ENCODE measurements at regions of chrX and their contacts with region 1.

Region 1: GRCh38 chrX:48957827-48958634 is 624 bp upstream of the OTUD5 start:
- DNase-seq: peak; percentile 95
- ATAC-seq: peak; percentile 85
- H3K4me3 Mint-ChIP-seq: peak overlapping the region; percentile 98
- H3K27ac Mint-ChIP-seq: peak overlapping the region; percentile 100
- H3K4me1 Mint-ChIP-seq: peaks cover 42% of the 10 kb centered on the region
- H3K27me3 Mint-ChIP-seq: no peaks in the 10 kb centered on the region
- CTCF ChIP-seq: no peak

Region 2: DNA sequence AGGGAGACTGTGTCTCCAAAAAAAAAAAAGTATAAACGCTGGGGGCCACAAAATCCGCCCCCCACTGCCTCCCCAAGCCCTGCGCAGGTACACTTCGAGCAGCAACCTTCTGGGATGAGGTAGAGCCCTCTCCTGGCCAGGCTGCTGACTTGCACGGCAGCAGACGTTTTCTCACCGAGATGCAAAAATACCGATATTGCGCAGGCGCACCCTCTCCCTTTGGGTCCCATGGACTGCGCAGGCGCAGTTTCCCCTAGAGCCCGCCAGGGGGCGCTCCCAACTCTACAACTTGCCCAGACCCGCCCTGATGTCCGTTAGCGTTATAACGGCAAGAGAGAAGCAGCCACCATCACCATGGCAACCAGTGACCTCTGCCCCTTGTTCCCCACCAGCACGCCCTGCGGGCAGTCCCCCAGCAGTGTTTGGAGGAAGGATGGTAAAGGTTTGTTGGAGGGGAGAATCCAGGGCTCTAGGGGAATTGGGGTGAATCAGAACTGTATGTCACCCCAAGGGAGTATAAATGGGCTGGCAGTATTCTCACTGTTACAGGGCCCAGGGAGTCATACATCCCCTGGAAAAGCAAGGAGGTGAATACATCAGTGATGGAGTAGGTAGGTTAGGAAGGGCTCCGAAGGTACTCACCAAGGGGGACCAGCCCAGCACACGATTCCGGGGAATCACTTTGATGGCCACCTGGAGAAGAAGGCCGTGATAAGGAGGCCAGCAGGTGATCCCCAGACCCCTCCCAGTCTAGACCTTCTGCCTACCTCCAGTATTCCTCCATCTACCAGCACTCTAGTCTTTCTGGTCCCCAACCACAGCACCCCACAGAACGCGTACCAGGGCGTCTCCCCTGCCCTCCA is 40.7 kb before region 1 on chrX:
- CTCF ChIA-PET with region 1: interaction called, 3 read pairs
- POLR2A ChIA-PET with region 1: interaction called, 10 read pairs
- intact Hi-C with region 1: no loop called
- DNase-seq: peak; percentile 94
- ATAC-seq: peak; percentile 46
- H3K4me3 Mint-ChIP-seq: peak overlapping the region; percentile 96
- H3K27ac Mint-ChIP-seq: peak overlapping the region; percentile 98
- H3K4me1 Mint-ChIP-seq: peaks cover 44% of the 10 kb centered on the region
- H3K27me3 Mint-ChIP-seq: no peaks in the 10 kb centered on the region
- CTCF ChIP-seq: peak; percentile 83

Region 3: GRCh38 chrX:48937054-48937907 is 20.8 kb before region 1 on chrX:
- CTCF ChIA-PET with region 1: no interaction called
- POLR2A ChIA-PET with region 1: interaction called, 48 read pairs
- intact Hi-C with region 1: no loop called
- DNase-seq: peak; percentile 95
- ATAC-seq: peak; percentile 61
- H3K4me3 Mint-ChIP-seq: peak overlapping the region; percentile 68
- H3K27ac Mint-ChIP-seq: peak overlapping the region; percentile 95
- H3K4me1 Mint-ChIP-seq: peaks cover 79% of the 10 kb centered on the region
- H3K27me3 Mint-ChIP-seq: no peaks in the 10 kb centered on the region
- CTCF ChIP-seq: peak; percentile 41

Region 4: DNA sequence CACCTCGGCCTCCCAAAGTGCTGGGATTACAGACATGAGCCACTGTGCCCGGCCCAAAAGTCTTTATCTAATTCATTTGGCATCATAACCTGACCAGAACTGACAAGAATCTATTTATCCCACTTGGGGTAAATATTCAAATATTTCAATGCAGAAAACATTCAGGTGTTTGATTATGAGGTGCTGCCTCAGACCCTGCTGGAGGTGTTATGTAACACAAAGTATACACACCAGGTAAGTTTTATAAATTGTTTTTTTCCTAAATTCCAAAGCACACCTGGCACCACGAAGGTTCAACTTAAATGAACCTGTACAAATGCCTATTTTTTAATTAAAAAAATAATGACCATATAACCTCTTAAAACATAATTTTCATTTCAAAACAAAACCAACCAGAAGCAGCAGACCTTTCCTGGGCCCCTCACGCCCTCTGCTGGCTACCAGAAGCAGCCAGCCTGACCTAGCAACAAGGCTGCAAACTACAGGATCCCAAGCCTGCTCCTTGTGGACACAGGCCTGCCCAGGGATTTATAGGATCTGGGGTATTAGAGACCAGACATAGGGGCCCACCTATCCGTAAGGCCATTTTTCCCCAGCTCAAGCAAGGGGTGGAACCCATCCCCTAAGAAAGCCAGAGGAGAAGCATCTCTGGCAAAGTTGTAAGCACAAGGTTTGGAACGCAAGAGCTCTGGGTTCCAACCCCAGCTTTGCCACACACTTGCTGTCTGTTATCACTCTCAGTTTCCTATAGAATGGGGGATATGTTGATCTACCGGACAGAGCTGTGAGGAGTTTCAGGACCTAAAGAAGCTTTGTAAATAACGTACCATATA is 12.3 kb before region 1 on chrX:
- CTCF ChIA-PET with region 1: interaction called, 18 read pairs
- POLR2A ChIA-PET with region 1: interaction called, 48 read pairs
- intact Hi-C with region 1: no loop called
- DNase-seq: peak; percentile 67
- ATAC-seq: peak; percentile 27
- H3K4me3 Mint-ChIP-seq: no peak overlapping the region
- H3K27ac Mint-ChIP-seq: peak overlapping the region; percentile 39
- H3K4me1 Mint-ChIP-seq: peaks cover 52% of the 10 kb centered on the region
- H3K27me3 Mint-ChIP-seq: no peaks in the 10 kb centered on the region
- CTCF ChIP-seq: peak; percentile 69

Region 5: DNA sequence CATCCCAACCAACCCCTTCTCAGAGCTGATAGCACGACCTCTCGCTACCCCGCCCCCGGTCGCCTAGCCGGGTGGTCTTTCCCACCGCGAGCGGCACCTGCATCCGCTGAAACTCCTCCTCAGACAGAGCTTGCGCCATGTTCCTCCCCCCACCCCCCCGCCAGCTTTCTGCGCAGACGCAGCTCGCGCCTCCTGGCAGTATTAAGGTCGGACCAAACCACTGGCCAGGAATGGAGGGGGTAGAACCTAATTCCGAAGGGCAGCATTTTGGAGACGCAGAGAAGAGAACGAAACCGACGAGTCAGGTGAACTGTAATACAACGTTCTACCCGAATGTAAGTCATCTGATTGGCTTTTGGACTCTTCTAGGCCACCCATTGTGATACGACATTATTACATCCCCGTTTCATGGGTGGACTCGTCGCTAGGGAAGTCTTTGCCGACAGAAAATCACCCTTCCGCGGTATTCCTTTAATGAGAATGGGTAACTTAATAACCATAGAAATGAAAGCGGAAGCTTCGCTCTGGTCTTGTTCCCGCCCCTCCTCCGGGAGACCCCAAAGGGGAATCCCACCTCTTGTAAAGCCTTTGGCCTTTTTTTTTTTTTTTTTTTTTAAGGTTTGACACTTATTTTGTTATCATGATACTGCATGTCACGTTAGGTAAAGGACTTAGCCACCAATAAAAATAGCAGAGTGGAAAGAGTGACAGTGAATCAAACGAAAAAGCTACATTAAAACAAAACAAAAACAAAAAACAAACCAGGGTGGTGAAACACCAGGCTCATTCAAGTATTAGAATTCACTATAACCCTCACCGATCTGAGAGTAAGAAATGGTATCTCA is 44.3 kb after region 1 on chrX and contains the start of gene GRIPAP1:
- CTCF ChIA-PET with region 1: no interaction called
- POLR2A ChIA-PET with region 1: interaction called, 3 read pairs
- intact Hi-C with region 1: loop called (anchors 10 kb)
- DNase-seq: peak; percentile 84
- ATAC-seq: peak; percentile 83
- H3K4me3 Mint-ChIP-seq: peak within 1 kb of the TSS; percentile 100
- H3K27ac Mint-ChIP-seq: peak within 1 kb of the TSS; percentile 99
- H3K4me1 Mint-ChIP-seq: peaks cover 33% of the 10 kb centered on the region
- H3K27me3 Mint-ChIP-seq: no peaks in the 10 kb centered on the region
- CTCF ChIP-seq: no peak
- total RNA-seq, gene GRIPAP1: 64.3 to 67.7 TPM

Region 6: DNA sequence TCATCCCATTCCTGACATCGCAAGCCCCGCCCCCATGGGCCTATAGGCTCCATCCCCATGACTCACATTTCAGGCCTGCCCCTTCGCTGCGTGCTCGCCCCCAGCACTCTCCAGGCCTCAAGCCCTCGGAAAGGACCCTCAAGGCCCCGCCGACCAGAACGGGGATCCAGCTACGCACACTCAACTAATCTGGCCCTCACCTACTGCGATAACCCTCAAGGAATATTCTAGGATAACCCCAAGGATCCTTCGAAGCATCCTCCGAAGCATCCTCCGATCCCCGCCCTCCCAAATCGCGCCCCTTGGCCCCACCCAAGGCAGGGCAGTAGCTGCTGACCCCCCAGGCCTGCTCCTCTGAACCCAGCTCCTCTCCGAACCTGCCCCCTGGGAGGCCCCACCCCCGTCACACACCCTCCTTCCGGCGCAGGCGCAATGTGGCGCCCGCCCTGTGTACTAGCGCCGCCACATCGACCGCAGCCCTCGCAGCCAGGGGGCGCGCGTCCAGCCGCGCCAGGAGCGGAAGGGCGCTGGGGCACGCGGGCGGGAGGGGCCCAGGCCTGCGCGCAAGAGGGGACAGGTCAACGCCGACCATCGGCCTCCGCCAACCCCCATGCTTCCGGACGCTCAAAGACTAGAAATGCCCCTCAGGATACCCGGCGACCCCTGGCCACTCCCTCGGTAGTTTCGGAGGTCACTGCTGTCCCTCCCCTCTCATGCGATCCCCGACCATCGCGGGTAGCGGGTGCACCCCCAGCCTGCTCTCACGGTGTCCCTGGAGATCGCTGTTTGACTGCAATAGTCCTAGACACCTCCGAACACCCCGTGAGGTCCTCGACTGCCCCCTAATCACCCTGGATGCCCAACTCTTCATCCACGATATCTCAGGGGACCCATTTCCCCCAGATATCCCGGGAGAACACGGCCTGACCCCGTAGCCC is 198.1 kb after region 1 on chrX:
- CTCF ChIA-PET with region 1: no interaction called
- POLR2A ChIA-PET with region 1: no interaction called
- intact Hi-C with region 1: no loop called
- DNase-seq: peak; percentile 86
- ATAC-seq: peak; percentile 90
- H3K4me3 Mint-ChIP-seq: peak overlapping the region; percentile 85
- H3K27ac Mint-ChIP-seq: peak overlapping the region; percentile 97
- H3K4me1 Mint-ChIP-seq: peaks cover 13% of the 10 kb centered on the region
- H3K27me3 Mint-ChIP-seq: no peaks in the 10 kb centered on the region
- CTCF ChIP-seq: peak; percentile 35

Region 7: DNA sequence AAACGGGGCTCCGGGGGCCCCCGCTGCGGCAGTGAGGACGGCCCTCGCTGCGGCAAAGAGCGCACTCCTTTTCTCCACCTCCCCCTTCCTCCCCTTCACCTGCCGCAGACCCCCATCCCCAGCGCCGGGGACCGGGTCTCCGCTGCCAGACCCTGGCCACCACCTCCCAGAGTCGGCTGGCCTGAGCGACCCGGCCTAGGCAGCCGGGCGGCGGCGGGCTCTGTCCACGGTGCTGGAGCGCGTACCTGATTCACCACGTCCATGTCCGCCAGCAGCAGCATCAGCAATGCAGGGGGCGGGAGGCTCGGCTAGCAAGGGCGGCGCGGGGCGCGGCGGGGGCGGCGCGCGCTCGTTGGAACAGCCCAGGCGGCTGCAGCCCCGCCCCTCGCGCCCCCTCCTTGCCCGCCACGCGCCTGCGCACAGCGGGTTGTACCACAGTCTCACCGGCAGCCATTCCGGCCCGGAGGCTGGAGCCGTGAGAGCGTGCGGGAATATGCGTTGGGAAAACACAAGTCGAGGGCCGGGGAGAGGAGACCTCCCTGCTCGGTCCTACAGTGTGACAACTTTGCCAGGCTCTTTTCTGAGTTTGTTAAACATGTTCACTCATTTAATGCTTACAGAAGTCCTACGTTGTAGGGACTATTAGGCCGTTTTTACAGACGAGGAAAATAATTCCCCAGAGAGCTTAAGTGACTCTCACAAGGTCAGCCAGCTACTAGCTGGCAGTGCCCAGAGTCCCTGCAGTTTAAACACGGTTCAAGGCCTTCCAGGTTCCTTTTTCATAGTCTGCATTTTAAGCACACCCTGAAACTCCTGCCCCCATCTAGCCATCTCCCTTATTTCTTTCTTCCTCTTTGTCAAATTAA is 242.1 kb after region 1 on chrX and contains the start of gene SYP:
- CTCF ChIA-PET with region 1: no interaction called
- POLR2A ChIA-PET with region 1: no interaction called
- intact Hi-C with region 1: no loop called
- DNase-seq: peak; percentile 92
- ATAC-seq: peak; percentile 99
- H3K4me3 Mint-ChIP-seq: peak within 1 kb of the TSS; percentile 54
- H3K27ac Mint-ChIP-seq: peak within 1 kb of the TSS; percentile 67
- H3K4me1 Mint-ChIP-seq: peaks cover 18% of the 10 kb centered on the region
- H3K27me3 Mint-ChIP-seq: no peaks in the 10 kb centered on the region
- CTCF ChIP-seq: no peak
- total RNA-seq, gene SYP: 10.2 to 11.4 TPM